Gastrocnemius medialis (tissue), 4 donors: ENCODE measurements at regions of chr18 and their contacts with region 1.

Region 1: GRCh38 chr18:45730832-45731575 is 7.0 kb downstream of the SLC14A1 start:
- DNase-seq: no peak
- ATAC-seq: no peak
- H3K4me3 ChIP-seq: no peak overlapping the region
- H3K27ac ChIP-seq: no peak overlapping the region
- H3K4me1 ChIP-seq: no peaks in the 10 kb centered on the region
- H3K27me3 ChIP-seq: no peaks in the 10 kb centered on the region
- CTCF ChIP-seq: no peak
- POLR2A ChIP-seq: no peak

Region 2: GRCh38 chr18:45626330-45627203 is 104.4 kb before region 1 on chr18:
- in situ Hi-C with region 1: loop called in 1 of 4 experiments (anchors 25 kb)
- intact Hi-C with region 1: no loop called
- DNase-seq: no peak
- ATAC-seq: no peak
- H3K4me3 ChIP-seq: no peak overlapping the region
- H3K27ac ChIP-seq: no peak overlapping the region
- H3K4me1 ChIP-seq: no peaks in the 10 kb centered on the region
- H3K27me3 ChIP-seq: no peaks in the 10 kb centered on the region
- CTCF ChIP-seq: no peak
- POLR2A ChIP-seq: no peak